ENCODE measurements at regions of chr3 and their contacts with region 1.

Region 1: GRCh38 chr3:161273589-161274218 is 52.6 kb downstream of the NMD3 start:
- DNase-seq: peak; percentile 45
- H3K4me3 ChIP-seq: no peak overlapping the region
- H3K27ac ChIP-seq: no peak overlapping the region
- H3K4me1 ChIP-seq: no peaks in the 10 kb centered on the region
- H3K27me3 ChIP-seq: no peaks in the 10 kb centered on the region
- CTCF ChIP-seq: peak; percentile 69 to 82 (median 78)
- POLR2A ChIP-seq: no peak

Region 2: DNA sequence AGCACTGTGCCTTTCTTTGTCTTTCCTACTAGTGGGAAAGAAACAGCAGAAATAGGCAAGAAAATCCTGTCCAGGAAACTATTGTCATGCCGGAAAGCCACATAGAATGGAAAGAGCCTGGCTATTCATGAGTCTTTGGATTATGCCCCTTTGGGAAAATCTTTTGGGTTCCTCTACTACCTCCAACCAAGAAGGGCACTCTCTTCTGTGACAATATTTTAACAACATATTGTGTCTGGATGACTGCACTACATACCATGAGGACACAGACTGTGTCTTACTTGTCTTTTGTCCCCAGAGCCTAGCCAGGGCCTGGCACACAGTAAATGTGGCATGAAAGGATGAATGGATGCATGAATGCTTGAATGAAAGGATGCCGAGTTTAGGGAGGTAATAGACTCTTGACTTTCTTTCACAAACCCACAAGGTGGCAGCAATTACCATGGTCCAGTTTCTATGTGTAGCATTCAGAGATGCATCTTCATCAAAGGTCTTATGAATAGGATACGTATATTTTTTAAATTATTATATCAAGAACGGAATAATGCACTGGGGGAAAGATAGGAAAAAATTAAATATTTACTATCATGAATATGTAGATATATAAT is 566.4 kb before region 1 on chr3:
- intact Hi-C with region 1: no loop called
- DNase-seq: peak; percentile 43
- H3K4me3 ChIP-seq: no peak overlapping the region
- H3K27ac ChIP-seq: no peak overlapping the region
- H3K4me1 ChIP-seq: no peaks in the 10 kb centered on the region
- H3K27me3 ChIP-seq: no peaks in the 10 kb centered on the region
- CTCF ChIP-seq: peak in 3 of 4 experiments; percentile 60 to 74 (median 68)
- POLR2A ChIP-seq: no peak

Region 3: GRCh38 chr3:161423911-161424522 is 150.3 kb after region 1 on chr3:
- intact Hi-C with region 1: loop called (anchors 2 kb)
- DNase-seq: no peak
- H3K4me3 ChIP-seq: no peak overlapping the region
- H3K27ac ChIP-seq: no peak overlapping the region
- H3K4me1 ChIP-seq: no peaks in the 10 kb centered on the region
- H3K27me3 ChIP-seq: no peaks in the 10 kb centered on the region
- CTCF ChIP-seq: peak; percentile 54 to 90 (median 85)
- POLR2A ChIP-seq: no peak